SK-N-SH (cell line): ENCODE measurements at regions of chr18 and their contacts with region 1.

Region 1: DNA sequence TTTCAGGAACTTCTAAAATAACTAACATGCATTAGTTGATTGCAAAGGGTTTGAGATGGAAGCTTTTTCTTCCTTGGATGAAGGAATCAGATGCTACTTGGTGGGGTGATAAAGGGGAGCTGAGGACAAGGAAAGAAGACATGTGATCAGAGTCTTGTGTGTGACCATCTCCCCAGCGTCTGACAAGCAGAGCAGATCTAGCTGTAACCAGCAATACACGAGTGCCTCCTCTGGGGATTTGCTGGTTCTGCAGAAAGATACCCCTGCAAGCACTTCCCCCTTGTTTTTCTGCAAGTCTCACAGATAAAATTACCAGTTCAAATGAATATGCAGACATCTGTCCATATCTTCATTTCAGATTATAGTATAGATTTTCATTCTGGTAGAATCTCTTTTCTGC is 2.7 kb downstream of the CDH7 start:
- DNase-seq: peak; percentile 69
- H3K4me3 ChIP-seq: no peak overlapping the region
- H3K27ac ChIP-seq: no peak overlapping the region
- H3K4me1 ChIP-seq: peaks cover 0 to 5% of the 10 kb centered on the region in 2 experiments; a peak in 2 of 4 replicates
- H3K27me3 ChIP-seq: no peaks in the 10 kb centered on the region
- CTCF ChIP-seq: peak; percentile 48
- EP300 ChIP-seq: no peak
- RAD21 ChIP-seq: peak; percentile 88

Region 2: GRCh38 chr18:65737471-65737955 is 16.0 kb before region 1 on chr18:
- CTCF ChIA-PET with region 1: interaction called, 27 read pairs
- POLR2A ChIA-PET with region 1: no interaction called
- DNase-seq: no peak
- H3K4me3 ChIP-seq: no peak overlapping the region
- H3K27ac ChIP-seq: no peak overlapping the region
- H3K4me1 ChIP-seq: no peaks in the 10 kb centered on the region; a peak in 1 of 4 replicates
- H3K27me3 ChIP-seq: no peaks in the 10 kb centered on the region
- CTCF ChIP-seq: no peak
- EP300 ChIP-seq: no peak
- RAD21 ChIP-seq: no peak